HCT116 (cell line): ENCODE measurements at regions of chr10 and their contacts with region 1.

Region 1: GRCh38 chr10:93482145-93482834 is at the start of gene MYOF:
- DNase-seq: peak; percentile 78
- ATAC-seq: peak; percentile 68
- H3K4me3 ChIP-seq: peak within 1 kb of the TSS; percentile 57 to 83
- H3K27ac ChIP-seq: peak within 1 kb of the TSS; percentile 98
- H3K4me1 ChIP-seq: peaks cover 41 to 58% of the 10 kb centered on the region in 2 experiments
- H3K27me3 ChIP-seq: no peaks in the 10 kb centered on the region
- CTCF ChIP-seq: peak; percentile 48 to 63 (median 51); a peak in 5 of 6 replicates
- POLR2A ChIP-seq: peak; percentile 18
- RAD21 ChIP-seq: peak; percentile 84
- total RNA-seq, gene MYOF: 250 TPM

Region 2: GRCh38 chr10:93370961-93371360 is 111.3 kb before region 1 on chr10:
- CTCF ChIA-PET with region 1: interaction called, 196 read pairs
- POLR2A ChIA-PET with region 1: interaction called, 36 read pairs
- RAD21 ChIA-PET with region 1: interaction called, 37 to 40 read pairs
- intact Hi-C with region 1: loop called (anchors 1 kb)
- DNase-seq: no peak
- ATAC-seq: no peak
- H3K4me3 ChIP-seq: no peak overlapping the region
- H3K27ac ChIP-seq: no peak overlapping the region
- H3K4me1 ChIP-seq: no peaks in the 10 kb centered on the region
- H3K27me3 ChIP-seq: no peaks in the 10 kb centered on the region
- CTCF ChIP-seq: no peak
- POLR2A ChIP-seq: no peak
- RAD21 ChIP-seq: no peak

Region 3: GRCh38 chr10:93383562-93383981 is 98.7 kb before region 1 on chr10:
- CTCF ChIA-PET with region 1: interaction called, 196 read pairs
- POLR2A ChIA-PET with region 1: interaction called, 19 read pairs
- RAD21 ChIA-PET with region 1: interaction called, 9 to 40 read pairs
- intact Hi-C with region 1: no loop called
- DNase-seq: no peak
- ATAC-seq: peak; percentile 69
- H3K4me3 ChIP-seq: peak overlapping the region; percentile 33 to 46
- H3K27ac ChIP-seq: peak overlapping the region; percentile 87
- H3K4me1 ChIP-seq: peaks cover 52 to 85% of the 10 kb centered on the region in 2 experiments
- H3K27me3 ChIP-seq: no peaks in the 10 kb centered on the region
- CTCF ChIP-seq: no peak
- POLR2A ChIP-seq: no peak
- RAD21 ChIP-seq: no peak

Region 4: GRCh38 chr10:93458821-93459257 is 23.5 kb before region 1 on chr10:
- CTCF ChIA-PET with region 1: interaction called, 13 read pairs
- POLR2A ChIA-PET with region 1: interaction called, 5 read pairs
- RAD21 ChIA-PET with region 1: interaction called, 4 to 5 read pairs
- intact Hi-C with region 1: no loop called
- DNase-seq: peak; percentile 97
- ATAC-seq: peak; percentile 81
- H3K4me3 ChIP-seq: peak overlapping the region; percentile 18 to 32
- H3K27ac ChIP-seq: peak overlapping the region; percentile 97
- H3K4me1 ChIP-seq: peaks cover 83 to 90% of the 10 kb centered on the region in 2 experiments
- H3K27me3 ChIP-seq: no peaks in the 10 kb centered on the region
- CTCF ChIP-seq: no peak
- POLR2A ChIP-seq: no peak
- RAD21 ChIP-seq: no peak

Region 5: DNA sequence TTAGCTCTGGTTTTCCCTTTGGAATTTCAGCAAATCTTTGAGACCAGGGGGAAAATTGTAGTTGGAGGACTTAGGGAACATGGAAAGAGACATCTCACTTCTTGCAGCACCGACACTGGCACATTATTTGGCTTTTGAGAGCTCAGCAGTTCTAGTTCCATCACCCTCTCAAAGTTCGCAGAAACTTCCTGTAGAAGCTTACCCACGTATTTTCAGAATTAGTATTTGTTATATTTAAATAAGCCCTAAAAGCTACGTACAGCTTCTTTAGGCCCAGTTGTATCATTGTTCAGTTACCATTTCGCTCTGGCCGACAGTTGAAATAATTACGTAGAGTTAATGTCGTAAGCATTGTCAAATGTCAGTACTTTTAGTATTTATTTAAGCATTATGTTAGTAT is 27.5 kb after region 1 on chr10:
- CTCF ChIA-PET with region 1: interaction called, 7 read pairs
- POLR2A ChIA-PET with region 1: no interaction called
- RAD21 ChIA-PET with region 1: no interaction called
- intact Hi-C with region 1: loop called (anchors 2 kb)
- DNase-seq: no peak
- ATAC-seq: no peak
- H3K4me3 ChIP-seq: no peak overlapping the region
- H3K27ac ChIP-seq: no peak overlapping the region
- H3K4me1 ChIP-seq: no peaks in the 10 kb centered on the region
- H3K27me3 ChIP-seq: no peaks in the 10 kb centered on the region
- CTCF ChIP-seq: no peak
- POLR2A ChIP-seq: no peak
- RAD21 ChIP-seq: no peak

Region 6: DNA sequence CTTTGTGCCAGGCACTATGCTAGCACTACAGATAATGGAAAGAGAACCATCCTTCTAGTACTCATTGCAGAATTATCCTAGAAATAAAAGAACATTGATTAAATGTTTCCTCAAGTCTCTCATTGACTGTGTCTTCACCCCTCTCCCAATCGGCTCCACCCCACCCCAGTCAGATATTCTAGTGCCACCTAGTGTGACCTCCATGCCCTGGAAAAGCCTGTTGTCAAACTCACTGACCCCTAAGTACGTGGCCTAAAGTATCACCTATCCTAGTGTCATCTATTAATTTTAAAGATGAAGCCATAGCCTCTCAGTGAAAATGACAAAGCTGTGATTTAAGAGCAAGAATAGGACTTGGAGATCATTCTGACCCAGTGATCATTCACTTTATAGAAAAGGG is 301.8 kb after region 1 on chr10:
- CTCF ChIA-PET with region 1: no interaction called
- POLR2A ChIA-PET with region 1: no interaction called
- RAD21 ChIA-PET with region 1: no interaction called
- intact Hi-C with region 1: no loop called
- DNase-seq: no peak
- ATAC-seq: no peak
- H3K4me3 ChIP-seq: no peak overlapping the region
- H3K27ac ChIP-seq: no peak overlapping the region
- H3K4me1 ChIP-seq: no peaks in the 10 kb centered on the region
- H3K27me3 ChIP-seq: no peaks in the 10 kb centered on the region
- CTCF ChIP-seq: no peak
- POLR2A ChIP-seq: no peak
- RAD21 ChIP-seq: peak; percentile 21; the same call in 1 of the 2 replicates

Region 7: DNA sequence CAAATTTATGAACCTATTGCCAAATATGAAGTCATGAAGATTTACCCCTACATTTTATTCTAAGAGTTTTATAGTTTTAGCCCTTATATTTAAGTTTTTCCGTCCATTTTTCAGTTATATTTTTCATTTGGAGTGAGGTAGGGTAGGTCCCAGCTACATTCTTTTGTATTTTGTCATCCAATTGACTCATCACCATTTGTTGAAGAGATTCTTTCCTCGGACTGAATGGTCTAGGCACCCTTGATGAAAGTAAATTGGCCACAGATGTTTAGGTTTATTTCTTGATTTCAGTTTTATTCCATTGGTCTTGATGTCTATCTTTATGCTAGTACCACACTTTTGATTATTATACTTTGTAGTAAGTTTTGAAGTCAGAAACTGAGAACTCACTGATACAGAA is 1302.9 kb after region 1 on chr10:
- CTCF ChIA-PET with region 1: no interaction called
- POLR2A ChIA-PET with region 1: no interaction called
- RAD21 ChIA-PET with region 1: no interaction called
- intact Hi-C with region 1: no loop called
- DNase-seq: no peak
- ATAC-seq: no peak
- H3K4me3 ChIP-seq: no peak overlapping the region
- H3K27ac ChIP-seq: no peak overlapping the region
- H3K4me1 ChIP-seq: no peaks in the 10 kb centered on the region
- H3K27me3 ChIP-seq: no peaks in the 10 kb centered on the region
- CTCF ChIP-seq: no peak
- POLR2A ChIP-seq: no peak
- RAD21 ChIP-seq: no peak